Left colon (tissue), 2 donors: ENCODE measurements at regions of chr3 and their contacts with region 1.

Region 1: DNA sequence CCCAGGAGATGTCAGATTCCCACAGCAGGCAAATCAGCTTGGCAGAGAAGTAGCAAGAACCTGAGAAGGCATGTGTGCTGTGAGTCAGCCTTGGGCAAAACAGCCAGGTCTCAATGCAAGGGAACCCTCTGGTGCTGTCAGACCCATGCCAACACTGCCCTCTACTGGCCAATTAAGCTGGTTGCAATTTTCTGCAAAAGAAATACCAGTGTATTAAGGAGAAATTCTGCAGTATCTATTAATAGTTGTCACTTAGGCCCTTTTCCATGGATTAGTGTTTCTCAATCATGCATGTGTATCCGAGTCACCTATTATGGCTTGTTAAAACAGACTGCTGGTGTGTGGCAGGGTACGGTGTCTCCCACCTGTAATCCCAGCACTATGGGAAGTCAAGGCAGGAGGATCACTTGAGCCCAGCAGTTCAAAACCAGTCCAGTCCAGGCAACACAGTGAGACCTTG is 26.2 kb downstream of the MAP4 start:
- DNase-seq: peak; percentile 60 to 68
- ATAC-seq: peak; percentile 92

Region 2: DNA sequence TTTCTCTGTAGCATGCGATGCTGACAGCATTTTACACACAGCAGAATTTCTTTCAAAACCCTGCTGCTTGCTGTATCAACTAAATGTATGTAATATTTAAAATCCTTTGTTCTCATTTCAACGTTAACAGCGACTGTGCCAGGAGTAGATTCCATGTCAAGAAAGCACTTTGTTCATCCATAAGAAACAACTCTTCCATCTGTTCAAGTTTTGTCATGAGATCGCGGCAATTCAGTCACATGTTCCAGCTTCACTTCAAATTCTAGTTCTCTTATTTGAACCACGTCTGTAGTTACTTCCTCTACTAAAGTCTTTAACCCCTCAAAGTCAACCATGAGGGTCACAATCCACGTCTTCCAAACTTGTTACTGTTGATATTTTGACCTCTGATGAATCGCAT is 258.9 kb before region 1 on chr3:
- intact Hi-C with region 1: no loop called
- DNase-seq: no peak
- ATAC-seq: no peak

Region 3: DNA sequence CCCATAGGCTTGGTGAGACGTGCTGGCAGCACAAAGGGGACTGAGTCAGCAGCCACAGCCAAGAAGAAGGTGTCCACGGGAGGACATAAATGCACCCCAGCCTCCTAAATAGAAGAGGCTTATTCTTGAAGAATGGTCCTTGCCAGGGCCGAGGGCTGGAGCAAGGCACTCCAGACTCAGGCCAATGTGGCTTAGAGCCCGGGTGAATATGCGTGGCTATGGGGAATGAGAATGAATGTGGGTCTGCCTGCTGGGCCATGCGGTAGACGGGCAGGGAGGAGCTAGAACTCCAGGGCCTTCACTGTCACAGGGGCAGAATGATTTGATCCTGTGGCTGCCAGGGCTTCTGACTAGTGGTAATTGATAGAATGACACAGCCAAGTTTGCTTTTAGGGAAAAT is 153.0 kb before region 1 on chr3:
- intact Hi-C with region 1: loop called in 1 of 2 experiments (anchors 10 kb)
- DNase-seq: no peak
- ATAC-seq: no peak

Region 4: GRCh38 chr3:47847256-47847655 is 142.8 kb before region 1 on chr3:
- intact Hi-C with region 1: no loop called
- DNase-seq: no peak
- ATAC-seq: no peak